AG04450 (cell line): ENCODE measurements at regions of chr17 and their contacts with region 1.

Region 1: GRCh38 chr17:21511363-21512198 is 135.4 kb downstream of the KCNJ12 start:
- DNase-seq: peak; percentile 21
- H3K4me3 ChIP-seq: peak overlapping the region; percentile 62
- H3K27ac ChIP-seq: no peak overlapping the region
- H3K27me3 ChIP-seq: peaks cover 24% of the 10 kb centered on the region
- CTCF ChIP-seq: peak; percentile 75

Region 2: GRCh38 chr17:21126645-21127510 is 384.7 kb before region 1 on chr17 and contains the start of gene DHRS7B:
- CTCF ChIA-PET with region 1: interaction called, 71 read pairs
- POLR2A ChIA-PET with region 1: no interaction called
- DNase-seq: peak; percentile 74
- H3K4me3 ChIP-seq: peak within 1 kb of the TSS; percentile 99
- H3K27ac ChIP-seq: peak within 1 kb of the TSS; percentile 81
- H3K27me3 ChIP-seq: peaks cover 8% of the 10 kb centered on the region
- CTCF ChIP-seq: no peak
- polyA plus RNA-seq, gene DHRS7B: 12.5 and 14.9 TPM in 2 replicates

Region 3: GRCh38 chr17:21457051-21458026 is 54.2 kb before region 1 on chr17:
- CTCF ChIA-PET with region 1: interaction called, 120 read pairs
- POLR2A ChIA-PET with region 1: interaction called, 5 read pairs
- DNase-seq: peak; percentile 59
- H3K4me3 ChIP-seq: no peak overlapping the region
- H3K27ac ChIP-seq: no peak overlapping the region
- H3K27me3 ChIP-seq: peaks cover 32% of the 10 kb centered on the region
- CTCF ChIP-seq: peak; percentile 84

Region 4: DNA sequence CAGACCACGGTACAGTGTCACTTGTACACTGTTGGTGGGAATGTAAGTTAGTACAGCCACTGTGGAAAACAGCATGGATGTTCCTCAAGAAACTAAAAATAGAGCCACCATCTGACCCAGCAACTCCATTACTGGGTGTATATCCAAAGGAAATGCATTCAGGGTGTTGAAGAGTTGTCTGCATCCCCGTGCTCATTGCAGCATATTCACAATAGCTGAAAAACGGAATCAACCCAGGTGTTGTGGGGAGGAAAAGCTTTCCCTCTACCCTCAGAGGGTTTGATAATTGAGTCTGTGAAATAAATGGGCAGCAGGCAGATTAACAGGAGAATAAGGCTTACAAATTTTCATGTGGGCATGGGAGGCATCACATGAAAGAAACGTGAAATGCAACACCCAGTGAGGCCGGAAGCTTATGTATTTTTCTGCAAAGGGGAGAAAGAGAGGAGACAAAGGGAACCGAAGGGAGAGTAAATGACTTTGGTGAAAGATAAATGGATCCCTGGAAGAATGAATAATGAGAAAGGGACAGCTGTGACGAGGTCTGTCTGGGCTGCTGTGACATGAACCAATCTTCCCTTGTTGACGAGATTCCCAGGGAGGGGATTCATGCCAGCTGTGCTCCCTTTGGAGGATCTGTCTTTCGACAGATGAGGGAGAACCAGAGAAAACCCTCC is 29.3 kb before region 1 on chr17:
- CTCF ChIA-PET with region 1: interaction called, 16 read pairs
- POLR2A ChIA-PET with region 1: no interaction called
- DNase-seq: no peak
- H3K4me3 ChIP-seq: no peak overlapping the region
- H3K27ac ChIP-seq: no peak overlapping the region
- H3K27me3 ChIP-seq: peaks cover 39% of the 10 kb centered on the region
- CTCF ChIP-seq: no peak

Region 5: DNA sequence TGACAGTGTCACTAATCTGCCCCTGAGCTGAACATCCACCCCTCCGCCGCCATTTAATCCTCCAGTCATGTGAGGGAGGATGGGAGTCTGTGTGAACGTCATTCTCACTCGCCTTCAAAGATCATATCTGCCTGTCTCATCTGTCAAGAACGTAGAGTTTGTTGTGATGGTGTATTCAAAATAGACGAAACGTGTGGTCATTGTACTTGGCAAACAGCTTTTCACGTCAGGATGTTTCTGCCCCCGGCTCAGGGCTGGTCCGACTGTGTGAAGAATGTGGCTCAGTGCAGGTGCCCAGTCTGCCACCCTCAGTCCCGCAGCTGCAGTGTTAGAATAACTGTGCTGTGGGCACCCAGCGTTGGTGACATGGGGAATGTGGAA is 12.6 kb after region 1 on chr17:
- CTCF ChIA-PET with region 1: interaction called, 60 read pairs
- POLR2A ChIA-PET with region 1: no interaction called
- DNase-seq: peak; percentile 45
- H3K4me3 ChIP-seq: no peak overlapping the region
- H3K27ac ChIP-seq: peak overlapping the region; percentile 31
- H3K27me3 ChIP-seq: no peaks in the 10 kb centered on the region
- CTCF ChIP-seq: no peak

Region 6: GRCh38 chr17:21542991-21543390 is 31.4 kb after region 1 on chr17:
- CTCF ChIA-PET with region 1: interaction called, 39 read pairs
- POLR2A ChIA-PET with region 1: no interaction called
- DNase-seq: no peak
- H3K4me3 ChIP-seq: no peak overlapping the region
- H3K27ac ChIP-seq: no peak overlapping the region
- H3K27me3 ChIP-seq: no peaks in the 10 kb centered on the region
- CTCF ChIP-seq: no peak